HCT116 (cell line): ENCODE measurements at regions of chr19 and their contacts with region 1.

Region 1: GRCh38 chr19:11987405-11988281 is 22.8 kb downstream of the ZNF763 start:
- DNase-seq: peak; percentile 68
- ATAC-seq: peak; percentile 94
- H3K4me3 ChIP-seq: peak overlapping the region; percentile 62 to 66
- H3K27ac ChIP-seq: no peak overlapping the region
- H3K4me1 ChIP-seq: peaks cover 0 to 10% of the 10 kb centered on the region in 2 experiments; a peak in 2 of 4 replicates
- H3K27me3 ChIP-seq: no peaks in the 10 kb centered on the region
- CTCF ChIP-seq: no peak
- POLR2A ChIP-seq: no peak
- RAD21 ChIP-seq: no peak

Region 2: DNA sequence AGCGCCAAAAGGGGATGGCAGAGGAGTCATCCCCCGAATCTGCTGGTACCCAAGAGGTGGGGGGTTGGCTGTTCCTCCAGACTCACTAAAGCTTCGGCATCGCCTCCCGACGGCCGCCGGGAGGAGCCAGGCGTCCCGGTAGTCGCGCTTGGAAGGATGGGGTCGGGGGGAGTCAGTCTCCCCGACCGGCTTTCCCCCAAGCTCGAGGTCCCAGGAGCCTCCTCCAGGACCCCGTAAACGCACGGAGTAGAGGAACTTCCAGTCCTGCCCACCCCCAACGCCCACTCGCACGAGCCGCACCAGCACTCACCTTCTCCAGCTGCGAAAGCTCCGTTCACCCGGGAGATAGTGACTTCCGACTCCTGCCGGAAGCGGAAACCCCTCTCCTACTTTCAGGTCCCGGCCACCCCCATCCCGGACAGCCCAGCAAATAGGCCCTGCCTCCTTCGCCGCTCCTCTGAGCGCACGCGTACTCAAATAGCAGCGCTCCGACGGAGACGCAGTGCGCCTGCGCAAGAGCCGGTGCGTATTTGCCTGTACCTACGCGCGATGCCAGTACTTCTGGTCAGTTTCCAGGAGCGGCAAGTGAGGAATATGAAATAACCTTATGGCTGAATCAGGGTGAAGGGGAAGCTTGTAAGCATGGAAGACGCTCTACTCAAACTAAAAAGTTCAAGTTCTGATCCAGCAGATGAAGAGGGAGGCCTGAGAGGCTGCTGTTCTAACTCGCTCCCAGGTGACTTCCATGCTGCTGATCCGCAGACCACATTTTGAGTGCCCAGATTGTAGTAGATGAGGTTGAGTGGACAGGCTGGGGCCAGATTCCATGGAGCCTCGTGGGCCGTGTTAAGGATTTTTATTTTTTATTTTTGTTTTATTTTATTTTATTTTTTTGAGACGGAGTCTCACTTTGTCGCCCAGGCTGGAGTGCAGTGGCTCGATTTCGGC is 428.5 kb before region 1 on chr19 and contains the start of gene ELOF1:
- CTCF ChIA-PET with region 1: no interaction called
- POLR2A ChIA-PET with region 1: no interaction called
- RAD21 ChIA-PET with region 1: no interaction called
- intact Hi-C with region 1: loop called (anchors 5 kb)
- DNase-seq: peak; percentile 97
- ATAC-seq: peak; percentile 94
- H3K4me3 ChIP-seq: peak within 1 kb of the TSS; percentile 85 to 94
- H3K27ac ChIP-seq: peak within 1 kb of the TSS; percentile 57
- H3K4me1 ChIP-seq: peaks cover 0 to 17% of the 10 kb centered on the region in 2 experiments; a peak in 2 of 4 replicates
- H3K27me3 ChIP-seq: no peaks in the 10 kb centered on the region
- CTCF ChIP-seq: peak in 2 of 3 experiments; percentile 7 to 28; a peak in 1 of 6 replicates
- POLR2A ChIP-seq: peak; percentile 92
- RAD21 ChIP-seq: no peak
- total RNA-seq, gene ELOF1: 74.5 TPM

Region 3: DNA sequence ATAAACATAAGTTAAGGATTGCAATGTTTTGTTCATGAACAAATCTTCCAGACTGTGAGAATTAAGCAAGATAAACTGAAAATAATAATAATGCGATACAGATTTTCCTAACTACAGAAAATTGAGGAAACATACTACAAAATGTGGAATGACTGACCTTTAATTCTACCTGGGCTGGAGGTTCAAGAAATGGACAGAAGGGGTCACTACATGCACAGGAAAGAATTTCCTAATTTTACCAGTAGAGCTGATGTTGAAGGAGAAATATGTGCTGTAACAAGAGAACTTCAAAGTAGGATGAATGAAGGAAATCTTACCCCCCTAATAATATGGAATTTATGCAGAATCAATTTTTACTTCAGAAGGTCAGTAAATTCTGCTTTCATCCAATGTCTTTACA is 328.0 kb before region 1 on chr19:
- CTCF ChIA-PET with region 1: interaction called, 3 read pairs
- POLR2A ChIA-PET with region 1: no interaction called
- RAD21 ChIA-PET with region 1: no interaction called
- intact Hi-C with region 1: loop called (anchors 1 kb)
- DNase-seq: no peak
- ATAC-seq: no peak
- H3K4me3 ChIP-seq: no peak overlapping the region
- H3K27ac ChIP-seq: no peak overlapping the region
- H3K4me1 ChIP-seq: no peaks in the 10 kb centered on the region
- H3K27me3 ChIP-seq: no peaks in the 10 kb centered on the region
- CTCF ChIP-seq: peak; percentile 29 to 54 (median 32); a peak in 4 of 6 replicates
- POLR2A ChIP-seq: no peak
- RAD21 ChIP-seq: peak; percentile 59

Region 4: DNA sequence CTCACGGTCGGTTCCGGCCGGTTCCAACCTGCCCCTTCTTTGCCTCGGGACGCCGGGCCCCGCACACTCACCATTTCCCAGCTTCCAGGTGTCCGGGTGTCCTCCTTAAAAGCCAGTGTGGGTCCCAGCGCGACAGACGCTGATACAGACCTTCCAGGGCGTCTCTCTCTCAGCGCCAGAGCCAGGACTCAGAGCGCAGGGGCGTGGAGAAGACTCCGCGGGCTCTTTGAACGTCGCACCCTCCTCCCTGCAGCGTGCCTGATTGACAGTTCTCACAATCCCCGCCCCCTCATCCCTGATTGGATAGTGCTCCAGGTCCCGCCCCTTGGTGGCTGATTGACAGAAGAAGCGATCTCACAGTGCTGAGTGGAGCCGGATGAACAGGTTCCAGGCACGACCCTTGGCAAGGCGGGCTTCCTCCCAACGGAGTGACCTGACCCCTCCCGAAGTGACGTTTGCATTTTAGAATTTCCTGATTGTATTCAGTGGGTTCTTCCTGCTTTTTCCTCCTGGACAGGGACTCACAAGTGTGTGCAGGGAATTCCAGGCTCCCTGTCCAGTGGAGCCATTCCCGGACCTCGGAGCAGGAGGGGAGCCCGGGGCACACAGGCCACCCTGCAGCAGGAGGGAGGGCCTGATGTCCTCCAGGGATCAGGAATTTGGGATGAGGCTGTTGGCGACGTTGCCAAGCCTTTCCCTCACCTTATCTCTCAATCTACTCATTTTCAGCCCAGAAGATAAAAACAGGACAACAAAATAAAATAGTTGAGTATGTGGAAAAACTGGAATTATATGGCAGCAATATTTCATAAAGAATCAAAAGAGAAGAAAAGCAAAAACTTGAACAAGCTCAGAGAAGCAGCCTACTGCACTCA is 248.7 kb before region 1 on chr19 and contains the start of gene ZNF823:
- CTCF ChIA-PET with region 1: no interaction called
- POLR2A ChIA-PET with region 1: no interaction called
- RAD21 ChIA-PET with region 1: no interaction called
- intact Hi-C with region 1: no loop called
- DNase-seq: peak; percentile 99
- ATAC-seq: peak; percentile 93
- H3K4me3 ChIP-seq: peak within 1 kb of the TSS; percentile 89 to 91
- H3K27ac ChIP-seq: peak within 1 kb of the TSS; percentile 82
- H3K4me1 ChIP-seq: peaks cover 16 to 29% of the 10 kb centered on the region in 2 experiments
- H3K27me3 ChIP-seq: no peaks in the 10 kb centered on the region
- CTCF ChIP-seq: no peak
- POLR2A ChIP-seq: peak; percentile 39
- RAD21 ChIP-seq: no peak
- total RNA-seq, gene ZNF823: 4.7 TPM

Region 5: GRCh38 chr19:11752244-11752736 is 235.4 kb before region 1 on chr19:
- CTCF ChIA-PET with region 1: no interaction called
- POLR2A ChIA-PET with region 1: no interaction called
- RAD21 ChIA-PET with region 1: no interaction called
- intact Hi-C with region 1: no loop called
- DNase-seq: no peak
- ATAC-seq: no peak
- H3K4me3 ChIP-seq: no peak overlapping the region
- H3K27ac ChIP-seq: no peak overlapping the region
- H3K4me1 ChIP-seq: no peaks in the 10 kb centered on the region
- H3K27me3 ChIP-seq: no peaks in the 10 kb centered on the region
- CTCF ChIP-seq: no peak
- POLR2A ChIP-seq: no peak
- RAD21 ChIP-seq: no peak

Region 6: GRCh38 chr19:11798391-11799330 is 189.0 kb before region 1 on chr19 and contains the start of gene ZNF491:
- CTCF ChIA-PET with region 1: interaction called, 4 read pairs
- POLR2A ChIA-PET with region 1: no interaction called
- RAD21 ChIA-PET with region 1: interaction called, 3 read pairs
- intact Hi-C with region 1: loop called (anchors 1 kb)
- DNase-seq: no peak
- ATAC-seq: no peak
- H3K4me3 ChIP-seq: no peak within 1 kb of the TSS
- H3K27ac ChIP-seq: no peak within 1 kb of the TSS
- H3K4me1 ChIP-seq: no peaks in the 10 kb centered on the region
- H3K27me3 ChIP-seq: no peaks in the 10 kb centered on the region
- CTCF ChIP-seq: no peak
- POLR2A ChIP-seq: no peak
- RAD21 ChIP-seq: no peak
- total RNA-seq, gene ZNF491: not detected

Region 7: DNA sequence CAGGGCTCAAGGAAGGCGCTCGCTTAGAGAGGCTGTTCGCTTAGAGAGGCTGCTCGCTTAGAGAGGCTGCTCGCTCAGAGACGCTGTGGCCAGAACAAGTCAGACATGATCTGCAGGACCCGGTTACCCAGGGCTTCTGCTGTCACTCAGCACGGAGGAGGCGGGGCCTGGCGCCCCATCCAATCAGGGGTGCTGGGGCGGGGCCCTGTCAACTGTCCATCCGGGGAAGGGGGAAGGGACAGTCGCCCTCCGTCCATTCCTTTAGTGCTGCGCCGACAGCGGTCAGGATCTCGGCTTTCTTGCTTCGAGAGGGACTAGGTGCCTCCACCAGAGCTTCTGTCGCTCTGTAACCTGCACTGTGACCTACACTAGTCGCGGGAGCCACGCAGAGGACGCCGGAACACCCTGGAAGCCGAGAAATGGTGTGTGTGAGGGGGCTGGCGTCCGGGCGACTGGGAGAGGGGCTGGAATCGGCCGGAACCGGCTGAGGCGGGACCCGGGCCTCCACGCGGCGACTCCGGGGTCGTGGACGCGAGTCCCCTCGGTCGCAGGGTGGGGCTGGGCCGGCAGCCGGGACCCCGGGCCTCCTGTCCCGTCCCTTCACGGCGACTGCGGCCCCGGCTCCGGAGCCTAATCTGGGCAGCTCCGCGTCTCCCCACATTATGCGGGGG is 173.5 kb before region 1 on chr19 and contains the start of gene ZNF440:
- CTCF ChIA-PET with region 1: no interaction called
- POLR2A ChIA-PET with region 1: no interaction called
- RAD21 ChIA-PET with region 1: no interaction called
- intact Hi-C with region 1: loop called (anchors 5 kb)
- DNase-seq: peak; percentile 83
- ATAC-seq: peak; percentile 100
- H3K4me3 ChIP-seq: peak within 1 kb of the TSS; percentile 73 to 89
- H3K27ac ChIP-seq: peak within 1 kb of the TSS; percentile 75
- H3K4me1 ChIP-seq: peaks cover 0 to 6% of the 10 kb centered on the region in 2 experiments; a peak in 1 of 4 replicates
- H3K27me3 ChIP-seq: no peaks in the 10 kb centered on the region
- CTCF ChIP-seq: no peak
- POLR2A ChIP-seq: no peak
- RAD21 ChIP-seq: no peak
- total RNA-seq, gene ZNF440: 11.4 TPM

Region 8: DNA sequence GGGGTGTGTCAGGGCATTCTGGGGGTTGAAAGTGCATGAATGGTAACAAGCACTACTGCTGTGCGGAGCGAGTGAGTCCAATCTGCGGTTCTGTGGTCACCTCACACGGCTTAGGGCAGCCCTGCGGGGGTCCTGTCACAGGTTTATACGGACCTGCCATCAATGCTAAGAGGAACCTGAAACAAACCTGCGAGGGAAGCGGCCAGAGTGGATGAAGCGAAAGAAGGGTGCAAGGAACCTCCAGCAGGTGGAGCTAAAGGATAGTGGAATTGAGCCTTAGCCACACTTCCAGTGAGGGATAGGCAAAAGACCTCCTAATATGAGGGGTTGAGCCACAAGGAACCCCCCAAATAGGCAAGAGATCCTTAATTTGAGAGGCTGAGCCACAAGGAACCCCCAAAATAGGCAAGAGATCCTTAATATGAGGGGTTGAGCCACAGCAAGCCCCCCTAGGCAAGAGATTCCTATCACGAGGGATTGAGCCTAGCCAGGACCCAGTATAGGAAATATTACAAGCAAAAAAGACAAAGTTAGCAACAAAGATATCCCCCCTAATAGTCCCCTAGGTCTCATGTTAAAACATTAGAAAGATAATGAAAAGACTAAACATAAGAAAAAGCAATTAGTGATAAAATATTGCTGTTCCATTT is 106.4 kb before region 1 on chr19:
- CTCF ChIA-PET with region 1: interaction called, 4 read pairs
- POLR2A ChIA-PET with region 1: no interaction called
- RAD21 ChIA-PET with region 1: no interaction called
- intact Hi-C with region 1: loop called (anchors 1 kb)
- DNase-seq: peak; percentile 23
- ATAC-seq: peak; percentile 70
- H3K4me3 ChIP-seq: no peak overlapping the region
- H3K27ac ChIP-seq: no peak overlapping the region
- H3K4me1 ChIP-seq: no peaks in the 10 kb centered on the region
- H3K27me3 ChIP-seq: no peaks in the 10 kb centered on the region
- CTCF ChIP-seq: peak; percentile 52 to 60 (median 58); a peak in 5 of 6 replicates
- POLR2A ChIP-seq: no peak
- RAD21 ChIP-seq: peak; percentile 76

Region 9: GRCh38 chr19:11924886-11925650 is 62.6 kb before region 1 on chr19 and contains the start of gene ZNF700:
- CTCF ChIA-PET with region 1: interaction called, 22 read pairs
- POLR2A ChIA-PET with region 1: interaction called, 3 read pairs
- RAD21 ChIA-PET with region 1: interaction called, 8 to 9 read pairs
- intact Hi-C with region 1: loop called (anchors 1 kb)
- DNase-seq: peak; percentile 85
- ATAC-seq: peak; percentile 94
- H3K4me3 ChIP-seq: peak within 1 kb of the TSS; percentile 79 to 86
- H3K27ac ChIP-seq: peak within 1 kb of the TSS; percentile 94
- H3K4me1 ChIP-seq: peaks cover 0 to 22% of the 10 kb centered on the region in 2 experiments; a peak in 2 of 4 replicates
- H3K27me3 ChIP-seq: no peaks in the 10 kb centered on the region
- CTCF ChIP-seq: no peak
- POLR2A ChIP-seq: no peak
- RAD21 ChIP-seq: no peak
- total RNA-seq, gene ZNF700: 9.3 TPM